AG04449 (cell line): ENCODE measurements at regions of chr11 and their contacts with region 1.

Region 1: GRCh38 chr11:128157423-128158298 is 429.7 kb downstream of the ETS1 start:
- DNase-seq: no peak
- H3K4me3 ChIP-seq: peak overlapping the region; percentile 41
- CTCF ChIP-seq: peak; percentile 75

Region 2: DNA sequence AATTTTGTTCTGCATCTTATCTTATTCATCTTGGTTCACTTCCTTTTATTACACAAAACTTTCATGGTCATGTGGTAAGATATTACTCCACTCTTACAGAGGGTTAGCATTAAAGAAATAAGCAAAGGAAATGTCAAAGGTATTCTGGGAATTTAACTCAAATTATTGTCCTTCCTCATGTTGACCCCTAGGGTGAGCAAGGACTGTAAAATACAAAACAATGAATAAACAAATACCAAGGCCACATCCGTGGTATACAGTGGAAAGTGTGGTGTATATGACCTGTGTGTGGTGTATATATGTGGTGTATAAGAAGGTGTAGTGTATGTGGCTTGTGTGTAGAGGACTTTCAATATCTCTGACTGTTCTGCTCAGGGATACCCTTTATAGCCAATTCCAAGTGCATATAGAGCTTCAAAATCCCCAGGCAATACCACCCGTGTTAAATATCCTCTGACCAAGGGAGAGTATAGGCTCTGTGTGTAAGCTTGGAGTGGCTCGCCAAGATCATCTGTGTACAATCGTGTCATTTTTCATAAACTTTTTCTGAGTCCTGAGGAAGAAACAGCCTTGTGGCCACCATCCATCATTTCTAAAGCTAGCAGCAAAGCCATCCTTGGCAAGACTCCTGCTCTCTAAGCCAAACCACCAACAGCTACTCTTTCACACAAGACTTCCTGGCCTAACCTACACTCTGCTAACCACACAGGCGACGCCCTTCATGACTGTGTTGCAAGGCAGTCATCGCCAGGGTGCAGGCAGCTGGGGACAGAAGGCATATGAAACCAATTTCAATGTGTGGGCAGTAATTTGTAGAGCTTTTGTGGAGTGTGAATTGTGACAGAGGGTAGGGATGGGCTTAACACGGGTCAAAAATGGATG is 118.3 kb before region 1 on chr11:
- CTCF ChIA-PET with region 1: interaction called, 90 read pairs
- POLR2A ChIA-PET with region 1: no interaction called
- DNase-seq: peak; percentile 57
- H3K4me3 ChIP-seq: no peak overlapping the region
- CTCF ChIP-seq: no peak

Region 3: GRCh38 chr11:128135451-128135850 is 22.2 kb before region 1 on chr11:
- CTCF ChIA-PET with region 1: interaction called, 55 read pairs
- POLR2A ChIA-PET with region 1: no interaction called
- DNase-seq: no peak
- H3K4me3 ChIP-seq: no peak overlapping the region
- CTCF ChIP-seq: no peak

Region 4: GRCh38 chr11:128522055-128522942 is 364.6 kb after region 1 on chr11:
- CTCF ChIA-PET with region 1: interaction called, 13 read pairs
- POLR2A ChIA-PET with region 1: no interaction called
- DNase-seq: peak; percentile 97
- H3K4me3 ChIP-seq: peak overlapping the region; percentile 82
- CTCF ChIP-seq: no peak

Region 5: GRCh38 chr11:128831174-128832120 is 673.8 kb after region 1 on chr11:
- CTCF ChIA-PET with region 1: interaction called, 116 read pairs
- POLR2A ChIA-PET with region 1: no interaction called
- DNase-seq: peak; percentile 42
- H3K4me3 ChIP-seq: no peak overlapping the region
- CTCF ChIP-seq: peak; percentile 82

Region 6: GRCh38 chr11:128890543-128891368 is 733.1 kb after region 1 on chr11 and contains the start of gene KCNJ5:
- CTCF ChIA-PET with region 1: interaction called, 13 read pairs
- POLR2A ChIA-PET with region 1: no interaction called
- DNase-seq: no peak
- H3K4me3 ChIP-seq: peak within 1 kb of the TSS; percentile 50
- CTCF ChIP-seq: no peak